Caco-2 (cell line): ENCODE measurements at regions of chr2 and their contacts with region 1.

Region 1: DNA sequence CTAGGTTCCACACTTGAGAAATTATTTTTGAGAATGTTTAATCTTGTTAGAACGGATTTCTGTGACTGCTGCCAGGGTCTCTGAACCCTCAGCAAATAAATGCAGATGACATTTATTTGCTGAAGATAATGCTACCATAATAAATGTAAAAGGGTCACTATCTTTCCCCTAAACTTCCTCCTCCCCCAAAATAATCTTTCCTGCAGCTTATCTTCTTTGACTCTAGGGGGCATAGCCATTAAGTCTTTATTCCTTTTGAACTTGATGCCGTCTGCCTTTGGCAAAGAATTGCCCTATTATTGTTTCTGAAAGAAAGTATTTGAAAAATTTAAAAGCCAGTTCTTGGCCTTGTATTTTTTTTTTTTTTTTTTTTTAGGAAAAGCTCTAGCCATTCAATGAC is 63.6 kb upstream of the ACSL3 start:
- DNase-seq: no peak
- H3K4me3 ChIP-seq: no peak overlapping the region
- H3K4me3 Mint-ChIP-seq: peak overlapping the region; percentile 39
- H3K27ac Mint-ChIP-seq: peak overlapping the region; percentile 20
- H3K4me1 ChIP-seq: peaks cover 64% of the 10 kb centered on the region
- H3K4me1 Mint-ChIP-seq: peaks cover 48% of the 10 kb centered on the region
- H3K27me3 ChIP-seq: no peaks in the 10 kb centered on the region
- H3K27me3 Mint-ChIP-seq: no peaks in the 10 kb centered on the region
- CTCF ChIP-seq: peak; percentile 33 to 43

Region 2: DNA sequence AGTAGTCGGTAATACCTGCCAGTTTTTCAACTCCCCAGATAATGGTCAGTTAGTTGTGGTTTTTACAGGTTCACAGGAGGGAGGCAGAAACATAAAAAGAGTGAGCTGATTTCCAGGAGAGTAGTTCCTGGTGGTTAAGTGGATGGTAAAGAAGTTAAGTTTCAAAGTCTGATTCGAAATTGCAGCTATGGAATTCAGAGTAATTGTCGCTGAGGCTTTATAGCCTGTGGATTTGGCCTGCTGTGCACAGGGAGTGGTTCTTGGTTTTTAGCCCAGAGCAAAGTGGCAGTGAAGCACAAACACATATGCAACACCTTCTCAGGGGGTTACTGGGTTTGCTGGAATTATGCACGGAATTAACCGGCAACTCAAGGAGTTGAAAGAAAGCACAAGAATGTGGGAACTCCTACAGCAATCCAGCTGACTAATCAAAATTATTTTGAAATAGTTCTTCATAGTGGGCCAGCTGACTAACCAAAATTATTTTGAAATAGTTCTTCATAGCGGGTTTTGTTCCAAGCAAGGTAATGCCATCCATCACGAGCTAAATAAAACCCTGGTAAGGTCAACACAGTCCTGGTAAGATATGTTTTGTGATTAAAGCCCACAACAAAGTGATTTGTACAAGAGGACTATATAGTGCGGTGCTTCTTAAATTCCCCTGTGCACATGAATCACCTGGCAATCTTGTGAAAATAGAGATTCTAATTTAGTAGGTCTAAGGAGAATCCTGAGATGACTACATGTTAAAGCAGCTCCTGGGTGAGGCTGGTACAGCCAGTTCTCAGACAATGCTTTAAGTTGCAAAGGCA is 278.5 kb before region 1 on chr2:
- CTCF ChIA-PET with region 1: no interaction called
- POLR2A ChIA-PET with region 1: no interaction called
- intact Hi-C with region 1: no loop called
- DNase-seq: peak in 1 of 2 experiments; percentile 8
- H3K4me3 ChIP-seq: no peak overlapping the region
- H3K4me3 Mint-ChIP-seq: no peak overlapping the region
- H3K27ac Mint-ChIP-seq: no peak overlapping the region
- H3K4me1 ChIP-seq: no peaks in the 10 kb centered on the region
- H3K4me1 Mint-ChIP-seq: no peaks in the 10 kb centered on the region
- H3K27me3 ChIP-seq: no peaks in the 10 kb centered on the region
- H3K27me3 Mint-ChIP-seq: no peaks in the 10 kb centered on the region
- CTCF ChIP-seq: no peak

Region 3: DNA sequence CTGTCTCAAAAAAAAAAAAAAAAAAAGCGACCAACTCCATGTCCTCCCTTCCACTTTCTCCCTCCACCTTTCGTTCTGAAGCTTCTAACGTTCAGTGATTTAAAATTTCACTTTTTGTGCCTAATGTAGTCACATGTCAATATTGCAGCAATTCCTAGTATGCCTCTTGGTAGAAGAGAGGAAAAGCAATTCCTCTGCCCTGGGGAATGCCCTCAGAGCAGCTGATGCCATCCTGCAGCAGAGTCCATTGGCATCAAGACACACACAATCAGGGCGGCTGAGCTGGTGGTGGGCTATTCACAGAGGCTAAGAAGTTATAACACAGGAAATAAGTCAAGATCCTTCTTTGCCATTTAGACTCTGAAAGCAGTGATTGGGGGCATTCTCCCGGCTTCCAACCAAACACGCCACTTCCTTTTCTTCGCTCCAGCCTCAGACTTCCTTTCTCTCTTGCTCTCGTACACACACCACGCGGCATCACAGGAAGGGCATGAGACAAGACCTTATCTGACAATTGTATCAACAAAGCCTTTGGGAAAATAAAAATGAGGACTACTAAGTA is 53.9 kb before region 1 on chr2:
- CTCF ChIA-PET with region 1: no interaction called
- POLR2A ChIA-PET with region 1: no interaction called
- intact Hi-C with region 1: no loop called
- DNase-seq: no peak
- H3K4me3 ChIP-seq: no peak overlapping the region
- H3K4me3 Mint-ChIP-seq: no peak overlapping the region
- H3K27ac Mint-ChIP-seq: no peak overlapping the region
- H3K4me1 ChIP-seq: peaks cover 6% of the 10 kb centered on the region
- H3K4me1 Mint-ChIP-seq: peaks cover 9% of the 10 kb centered on the region
- H3K27me3 ChIP-seq: no peaks in the 10 kb centered on the region
- H3K27me3 Mint-ChIP-seq: no peaks in the 10 kb centered on the region
- CTCF ChIP-seq: no peak

Region 4: DNA sequence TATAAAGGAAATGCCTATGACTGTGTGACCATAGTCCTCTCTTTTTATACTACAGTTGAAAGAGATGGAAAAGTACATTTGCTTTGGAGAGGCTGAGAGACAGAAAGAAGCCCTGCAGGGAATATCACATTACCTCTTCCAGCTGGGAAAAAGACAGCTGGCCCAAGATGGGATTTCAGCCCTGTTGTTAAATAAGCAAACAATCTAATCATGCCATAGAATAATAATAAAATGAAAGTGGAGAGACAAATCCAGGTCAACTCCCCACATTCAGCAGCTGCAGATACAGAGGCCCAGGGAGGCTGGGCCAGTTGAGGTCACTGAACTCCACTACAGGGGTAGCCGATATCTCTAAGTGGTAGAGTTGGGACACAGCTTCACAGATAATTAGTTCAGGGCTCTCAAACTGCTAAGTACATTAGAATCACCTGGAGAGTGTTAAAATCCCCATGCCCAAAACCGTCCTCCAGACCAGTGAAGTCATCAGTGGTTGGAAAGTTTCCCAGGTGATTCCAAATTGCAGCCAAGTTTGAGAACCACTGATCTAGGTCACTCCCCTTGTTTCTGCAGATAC is 43.9 kb before region 1 on chr2:
- CTCF ChIA-PET with region 1: interaction called, 6 read pairs
- POLR2A ChIA-PET with region 1: no interaction called
- intact Hi-C with region 1: loop called (anchors 1 kb)
- DNase-seq: no peak
- H3K4me3 ChIP-seq: no peak overlapping the region
- H3K4me3 Mint-ChIP-seq: no peak overlapping the region
- H3K27ac Mint-ChIP-seq: no peak overlapping the region
- H3K4me1 ChIP-seq: peaks cover 24% of the 10 kb centered on the region
- H3K4me1 Mint-ChIP-seq: peaks cover 26% of the 10 kb centered on the region
- H3K27me3 ChIP-seq: no peaks in the 10 kb centered on the region
- H3K27me3 Mint-ChIP-seq: no peaks in the 10 kb centered on the region
- CTCF ChIP-seq: no peak

Region 5: GRCh38 chr2:222842491-222843174 is 45.4 kb after region 1 on chr2:
- CTCF ChIA-PET with region 1: interaction called, 4 read pairs
- POLR2A ChIA-PET with region 1: no interaction called
- intact Hi-C with region 1: loop called (anchors 1 kb)
- DNase-seq: no peak
- H3K4me3 ChIP-seq: no peak overlapping the region
- H3K4me3 Mint-ChIP-seq: no peak overlapping the region
- H3K27ac Mint-ChIP-seq: no peak overlapping the region
- H3K4me1 ChIP-seq: peaks cover 33% of the 10 kb centered on the region
- H3K4me1 Mint-ChIP-seq: peaks cover 17% of the 10 kb centered on the region
- H3K27me3 ChIP-seq: no peaks in the 10 kb centered on the region
- H3K27me3 Mint-ChIP-seq: no peaks in the 10 kb centered on the region
- CTCF ChIP-seq: no peak

Region 6: DNA sequence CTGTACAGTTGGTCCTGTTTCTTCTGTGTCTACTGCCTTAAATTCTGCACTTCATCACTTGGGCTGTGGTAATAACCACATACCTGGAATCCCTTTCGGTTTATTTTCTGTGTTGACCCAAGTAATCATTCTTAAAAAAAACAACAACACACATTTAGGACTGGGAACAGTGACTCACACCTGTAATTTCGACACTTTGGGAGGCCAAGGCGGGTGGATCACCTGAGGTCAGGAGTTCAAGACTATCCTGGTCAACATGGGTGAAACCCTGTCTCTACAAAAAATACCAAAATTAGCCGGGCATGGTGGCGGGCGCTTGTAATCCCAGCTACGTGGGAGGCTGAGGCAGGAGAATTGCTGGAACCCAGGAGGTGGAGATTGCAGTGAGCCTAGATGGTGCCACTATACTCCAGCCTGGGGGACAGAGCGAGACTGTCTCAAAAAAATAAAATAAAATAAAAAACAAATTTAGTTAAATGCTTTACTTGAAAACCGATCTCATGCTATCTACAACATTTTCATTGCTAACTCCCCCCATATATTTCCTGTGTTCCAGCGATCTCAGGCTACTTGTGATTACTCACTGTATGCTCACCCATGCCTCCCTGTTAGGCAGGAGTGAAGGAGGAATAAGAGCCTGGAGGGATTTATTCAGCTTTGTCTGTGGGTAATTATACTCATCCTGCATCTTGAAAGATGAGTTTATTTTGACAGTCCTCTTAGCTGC is 81.8 kb after region 1 on chr2:
- CTCF ChIA-PET with region 1: interaction called, 4 read pairs
- POLR2A ChIA-PET with region 1: no interaction called
- intact Hi-C with region 1: loop called (anchors 1 kb)
- DNase-seq: peak in 1 of 2 experiments; percentile 46
- H3K4me3 ChIP-seq: no peak overlapping the region
- H3K4me3 Mint-ChIP-seq: no peak overlapping the region
- H3K27ac Mint-ChIP-seq: peak overlapping the region; percentile 3
- H3K4me1 ChIP-seq: peaks cover 41% of the 10 kb centered on the region
- H3K4me1 Mint-ChIP-seq: peaks cover 30% of the 10 kb centered on the region
- H3K27me3 ChIP-seq: no peaks in the 10 kb centered on the region
- H3K27me3 Mint-ChIP-seq: no peaks in the 10 kb centered on the region
- CTCF ChIP-seq: no peak

Region 7: GRCh38 chr2:222939208-222939856 is 142.1 kb after region 1 on chr2:
- CTCF ChIA-PET with region 1: interaction called, 12 read pairs
- POLR2A ChIA-PET with region 1: no interaction called
- intact Hi-C with region 1: no loop called
- DNase-seq: peak; percentile 86 to 91
- H3K4me3 ChIP-seq: no peak overlapping the region
- H3K4me3 Mint-ChIP-seq: no peak overlapping the region
- H3K27ac Mint-ChIP-seq: no peak overlapping the region
- H3K4me1 ChIP-seq: peaks cover 23% of the 10 kb centered on the region
- H3K4me1 Mint-ChIP-seq: peaks cover 23% of the 10 kb centered on the region
- H3K27me3 ChIP-seq: no peaks in the 10 kb centered on the region
- H3K27me3 Mint-ChIP-seq: no peaks in the 10 kb centered on the region
- CTCF ChIP-seq: peak; percentile 97 to 98